ENCODE measurements at regions of chr1 and their contacts with region 1.

Region 1: DNA sequence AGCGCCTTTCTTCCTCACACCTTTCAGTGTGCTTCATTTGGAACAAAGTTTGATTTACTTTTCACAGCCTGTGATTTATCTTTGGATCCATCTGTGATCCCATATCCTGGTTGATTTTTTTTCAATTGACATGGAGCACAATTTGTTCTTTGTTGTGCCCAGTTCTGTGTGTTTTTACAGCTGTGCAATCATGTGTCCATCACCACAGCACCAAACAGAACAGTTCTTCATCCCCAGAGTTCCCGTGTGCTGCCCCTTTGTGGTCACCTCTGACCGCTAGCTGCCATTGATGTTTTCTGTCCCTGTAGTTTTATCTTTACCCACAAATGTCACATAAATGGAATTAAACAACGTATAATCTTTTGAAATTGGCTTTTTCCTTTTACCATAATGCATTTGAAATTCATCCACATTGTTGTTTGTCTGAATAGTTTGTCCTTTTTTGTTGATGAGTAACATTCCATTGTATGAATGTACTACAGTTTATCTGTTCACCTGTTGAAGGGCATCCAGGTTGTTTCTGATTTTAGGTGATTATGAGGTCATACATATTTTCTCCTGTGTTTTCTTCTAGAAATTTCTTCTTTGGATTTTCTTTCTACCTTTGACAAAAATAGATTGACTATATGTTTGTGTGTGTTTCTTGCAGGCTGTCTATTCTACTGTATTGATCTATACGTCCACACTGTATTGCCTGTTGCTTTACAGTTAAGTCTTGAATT is 17.4 kb downstream of the MIGA1 start:
- DNase-seq: no peak
- H3K4me3 ChIP-seq: no peak overlapping the region
- H3K27ac ChIP-seq: no peak overlapping the region
- H3K4me1 ChIP-seq: no peaks in the 10 kb centered on the region
- CTCF ChIP-seq: 0 out of 2 replicates have a peak, but pooled peaks have one; percentile 19

Region 2: DNA sequence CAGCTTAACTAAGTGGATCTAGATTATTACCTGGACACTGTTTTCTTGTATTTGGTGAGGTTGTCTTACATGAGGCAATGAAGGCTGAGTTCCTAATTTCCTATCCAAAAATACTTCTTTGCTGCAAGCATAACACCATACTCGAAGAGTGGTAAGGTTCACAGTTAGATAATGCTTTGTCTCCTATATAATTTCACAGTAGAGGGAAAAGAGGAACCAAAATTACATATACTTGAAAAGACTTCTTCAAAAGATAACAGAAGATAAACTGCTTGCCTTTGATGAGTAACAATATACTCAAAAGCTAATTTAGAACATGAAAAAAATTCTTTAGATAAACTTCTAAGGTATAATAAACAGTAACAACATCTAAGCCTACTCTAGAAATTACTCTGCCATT is 57.6 kb before region 1 on chr1:
- CTCF ChIA-PET with region 1: no interaction called
- POLR2A ChIA-PET with region 1: interaction called, 3 read pairs
- intact Hi-C with region 1: loop called (anchors 10 kb)
- DNase-seq: no peak
- H3K4me3 ChIP-seq: no peak overlapping the region
- H3K27ac ChIP-seq: no peak overlapping the region
- H3K4me1 ChIP-seq: no peaks in the 10 kb centered on the region
- CTCF ChIP-seq: no peak

Region 3: GRCh38 chr1:77779529-77780281 is 17.2 kb before region 1 on chr1 and contains the start of gene MIGA1:
- CTCF ChIA-PET with region 1: no interaction called
- POLR2A ChIA-PET with region 1: interaction called, 11 read pairs
- intact Hi-C with region 1: no loop called
- DNase-seq: peak; percentile 90
- H3K4me3 ChIP-seq: peak within 1 kb of the TSS; percentile 96
- H3K27ac ChIP-seq: peak within 1 kb of the TSS; percentile 21
- H3K4me1 ChIP-seq: peaks cover 24% of the 10 kb centered on the region
- CTCF ChIP-seq: no peak; the same call in 1 of the 2 replicates
- total RNA-seq, gene MIGA1: 3.7 and 5.1 TPM in 2 replicates

Region 4: DNA sequence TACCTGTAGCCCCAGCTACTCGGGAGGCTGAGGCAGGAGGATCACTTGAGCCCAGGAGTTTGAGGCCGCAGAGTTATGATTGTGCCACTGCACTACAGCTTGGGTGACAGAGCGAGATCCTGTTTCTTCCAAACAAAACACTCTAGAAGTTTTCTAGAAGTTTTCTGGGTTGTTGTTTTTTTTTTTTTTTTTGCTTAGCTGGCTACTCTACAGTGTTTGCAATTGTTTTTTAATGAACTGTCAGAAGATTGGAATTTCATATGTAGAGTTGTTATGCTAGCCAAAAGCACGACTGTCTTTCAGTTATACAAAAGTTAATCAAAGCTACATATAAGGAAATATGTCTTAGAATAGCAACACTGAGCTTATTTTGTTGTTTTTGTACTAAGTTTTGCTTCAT is 60.7 kb after region 1 on chr1:
- CTCF ChIA-PET with region 1: no interaction called
- POLR2A ChIA-PET with region 1: no interaction called
- intact Hi-C with region 1: no loop called
- DNase-seq: no peak
- H3K4me3 ChIP-seq: no peak overlapping the region
- H3K27ac ChIP-seq: no peak overlapping the region
- H3K4me1 ChIP-seq: no peaks in the 10 kb centered on the region
- CTCF ChIP-seq: no peak

Measured in OCI-LY7 (cell line).